Posterior vena cava (tissue), 2 donors: ENCODE measurements at regions of chr5 and their contacts with region 1.

Region 1: GRCh38 chr5:71693828-71694427 is 25.1 kb upstream of the CARTPT start:
- DNase-seq: no peak

Region 2: GRCh38 chr5:71601222-71602041 is 92.5 kb before region 1 on chr5:
- intact Hi-C with region 1: no loop called
- DNase-seq: no peak

Region 3: DNA sequence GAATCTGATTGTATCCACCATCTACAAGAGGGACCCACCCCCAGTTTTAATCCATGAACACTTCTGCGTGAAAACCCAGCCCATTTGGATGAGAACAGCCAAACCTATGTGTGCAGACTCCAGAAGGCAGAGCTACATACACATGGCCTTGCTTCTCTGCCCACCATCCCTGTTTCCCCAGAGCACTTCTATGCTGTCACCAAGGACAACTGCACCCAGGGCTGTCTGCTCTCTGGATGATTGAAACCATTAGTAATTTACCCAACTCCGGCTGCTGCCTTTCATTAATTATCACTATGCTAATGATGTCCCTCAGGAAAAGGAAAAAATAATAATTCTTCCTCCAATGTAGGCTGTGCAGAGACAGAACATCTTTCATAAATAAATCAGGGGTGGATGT is 34.0 kb after region 1 on chr5:
- intact Hi-C with region 1: loop called in 1 of 2 experiments (anchors 1 kb)
- DNase-seq: no peak